ENCODE measurements at regions of chr19 and their contacts with region 1.

Region 1: GRCh38 chr19:49877020-49877878 is at the starts of genes AKT1S1 and TBC1D17:
- DNase-seq: peak; percentile 99
- ATAC-seq: peak; percentile 83
- total RNA-seq, gene AKT1S1: 37.2 TPM
- total RNA-seq, gene TBC1D17: 44.9 TPM

Region 2: DNA sequence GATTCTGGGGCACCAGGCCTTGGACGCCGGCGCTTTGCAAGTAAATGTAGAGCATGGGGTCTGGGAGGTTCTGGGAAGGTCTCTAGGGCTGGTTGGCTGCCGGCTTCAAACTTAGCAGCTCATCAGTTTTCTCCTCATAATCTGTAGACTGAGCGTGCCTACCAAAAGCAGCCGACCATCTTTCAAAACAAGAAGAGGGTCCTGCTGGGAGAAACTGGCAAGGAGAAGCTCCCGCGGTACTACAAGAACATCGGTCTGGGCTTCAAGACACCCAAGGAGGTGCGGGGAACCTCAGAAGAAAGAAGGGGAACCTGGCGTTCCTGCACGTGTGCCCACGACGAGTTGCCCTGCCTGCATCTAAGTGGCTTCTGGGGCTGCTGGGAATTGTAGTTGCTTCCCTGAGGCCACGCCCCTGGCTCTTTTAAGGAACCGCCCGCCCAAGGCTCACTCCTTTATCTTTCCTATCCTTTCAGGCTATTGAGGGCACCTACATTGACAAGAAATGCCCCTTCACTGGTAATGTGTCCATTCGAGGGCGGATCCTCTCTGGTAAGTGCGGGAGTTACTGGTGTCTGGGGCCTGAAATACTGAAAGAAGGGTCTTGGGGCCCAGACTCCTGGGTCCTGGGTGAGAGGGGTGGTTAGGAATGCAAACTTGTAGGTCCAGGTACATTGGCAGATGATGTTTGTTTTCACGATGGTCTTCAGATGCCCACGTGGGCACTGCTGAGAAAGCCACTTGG is 380.0 kb before region 1 on chr19:
- intact Hi-C with region 1: loop called (anchors 10 kb)
- DNase-seq: peak; percentile 89
- ATAC-seq: no peak

Region 3: DNA sequence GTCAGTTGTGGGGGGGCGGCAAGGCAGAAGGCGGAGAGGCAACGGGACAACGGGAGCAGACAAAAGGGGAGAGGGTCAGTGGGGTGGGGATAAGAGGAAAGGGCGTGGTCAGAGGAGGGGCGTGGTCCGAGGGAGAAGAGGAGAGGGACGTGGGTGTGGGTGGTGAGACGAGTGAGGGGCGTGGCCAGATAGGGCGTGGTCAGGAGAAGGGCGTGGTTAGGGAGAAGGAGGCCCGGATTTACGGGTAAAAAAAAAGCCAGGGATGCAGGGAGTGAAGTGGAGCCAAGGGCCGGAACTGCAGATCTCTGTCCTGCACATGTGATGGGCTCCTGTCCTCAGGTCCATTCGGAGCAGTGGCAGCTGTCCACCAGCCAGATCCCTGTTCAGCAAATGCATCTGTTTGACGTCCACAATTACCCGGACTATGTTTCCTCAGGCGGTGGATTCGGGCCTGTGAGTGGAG is 164.8 kb before region 1 on chr19:
- intact Hi-C with region 1: no loop called
- DNase-seq: no peak
- ATAC-seq: peak; percentile 61

Region 4: GRCh38 chr19:49817964-49818648 is 59.1 kb before region 1 on chr19 and contains the start of gene MED25:
- intact Hi-C with region 1: loop called (anchors 2 kb)
- DNase-seq: peak; percentile 95
- ATAC-seq: peak; percentile 73
- total RNA-seq, gene MED25: 70.4 TPM